HEK293 (cell line): ENCODE measurements at regions of chr6 and their contacts with region 1.

Region 1: GRCh38 chr6:2841264-2842138 is at the start of gene SERPINB1:
- H3K4me3 ChIP-seq: peak within 1 kb of the TSS; percentile 49
- H3K27ac ChIP-seq: peak within 1 kb of the TSS; percentile 54; the same call in 1 of the 2 replicates
- H3K4me1 ChIP-seq: peaks cover 25% of the 10 kb centered on the region
- CTCF ChIP-seq: peak; percentile 64

Region 2: GRCh38 chr6:2285510-2285909 is 556.0 kb before region 1 on chr6:
- CTCF ChIA-PET with region 1: no interaction called
- POLR2A ChIA-PET with region 1: no interaction called
- H3K4me3 ChIP-seq: no peak overlapping the region
- H3K27ac ChIP-seq: no peak overlapping the region
- H3K4me1 ChIP-seq: no peaks in the 10 kb centered on the region
- CTCF ChIP-seq: no peak

Region 3: GRCh38 chr6:2818593-2818992 is 22.9 kb before region 1 on chr6:
- CTCF ChIA-PET with region 1: interaction called, 10 read pairs
- POLR2A ChIA-PET with region 1: interaction called, 9 read pairs
- H3K4me3 ChIP-seq: no peak overlapping the region
- H3K27ac ChIP-seq: no peak overlapping the region
- H3K4me1 ChIP-seq: peaks cover 3% of the 10 kb centered on the region; the same call in 1 of the 2 replicates
- CTCF ChIP-seq: no peak